ENCODE measurements at regions of chr12 and their contacts with region 1.

Region 1: GRCh38 chr12:9673404-9674225 is 4.1 kb downstream of the CLEC2D start:
- DNase-seq: peak; percentile 48
- H3K4me3 Mint-ChIP-seq: peak overlapping the region; percentile 93
- H3K27ac Mint-ChIP-seq: peak overlapping the region; percentile 97
- H3K4me1 Mint-ChIP-seq: peaks cover 58% of the 10 kb centered on the region
- H3K27me3 Mint-ChIP-seq: no peaks in the 10 kb centered on the region

Region 2: GRCh38 chr12:9244894-9245293 is 428.7 kb before region 1 on chr12:
- intact Hi-C with region 1: loop called (anchors 10 kb)
- DNase-seq: peak; percentile 13
- H3K4me3 Mint-ChIP-seq: no peak overlapping the region
- H3K27ac Mint-ChIP-seq: peak overlapping the region; percentile 95
- H3K4me1 Mint-ChIP-seq: peaks cover 39% of the 10 kb centered on the region
- H3K27me3 Mint-ChIP-seq: peaks cover 11% of the 10 kb centered on the region

Region 3: DNA sequence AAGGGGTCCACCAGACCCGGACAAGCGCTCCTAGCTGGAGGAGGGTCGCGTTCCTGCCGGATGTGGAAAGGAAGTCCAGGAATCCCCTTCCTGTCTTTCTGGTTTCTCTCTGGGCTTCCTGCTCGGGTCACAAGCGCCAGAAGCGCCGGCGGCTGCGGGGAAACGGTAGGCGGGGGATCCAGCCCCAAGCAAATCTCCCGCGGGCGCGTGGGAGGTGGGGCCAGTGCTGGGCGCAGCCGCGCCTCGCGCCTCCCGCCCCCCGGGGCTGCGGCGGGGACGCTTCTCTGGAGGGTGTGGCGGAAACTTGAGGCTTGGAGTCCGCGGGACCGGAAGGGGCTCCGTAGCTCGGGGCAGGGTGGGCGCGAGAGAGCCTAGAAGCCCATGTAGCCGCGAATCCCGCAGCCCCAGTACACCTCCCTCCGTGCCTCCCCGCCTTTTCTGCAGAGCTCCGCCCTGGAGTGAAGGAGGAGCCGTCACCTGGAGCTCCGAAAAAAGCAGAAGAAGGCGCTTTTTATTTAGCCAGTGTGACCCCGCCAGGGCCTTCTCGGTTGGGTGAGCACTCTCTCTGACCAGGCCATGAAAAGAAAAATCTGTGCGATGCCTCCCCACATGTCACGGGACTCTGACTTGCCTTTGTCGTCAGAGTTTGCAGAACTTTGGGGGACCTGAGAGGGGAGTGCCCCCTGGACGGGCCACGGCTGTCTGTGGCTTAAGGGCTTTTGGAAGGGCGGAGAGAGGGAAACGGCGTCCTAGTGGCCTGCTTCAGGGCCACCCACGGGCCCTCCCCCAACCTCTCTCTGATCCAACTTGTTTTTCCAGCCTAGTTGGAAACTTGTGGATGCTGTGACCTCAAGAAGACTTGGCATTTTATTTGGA is 25.6 kb before region 1 on chr12:
- intact Hi-C with region 1: loop called (anchors 1 kb)
- DNase-seq: peak; percentile 95
- H3K4me3 Mint-ChIP-seq: peak overlapping the region; percentile 94
- H3K27ac Mint-ChIP-seq: peak overlapping the region; percentile 96
- H3K4me1 Mint-ChIP-seq: peaks cover 46% of the 10 kb centered on the region
- H3K27me3 Mint-ChIP-seq: no peaks in the 10 kb centered on the region

Region 4: GRCh38 chr12:9697619-9698018 is 24.0 kb after region 1 on chr12:
- intact Hi-C with region 1: no loop called
- DNase-seq: no peak
- H3K4me3 Mint-ChIP-seq: no peak overlapping the region
- H3K27ac Mint-ChIP-seq: peak overlapping the region; percentile 8
- H3K4me1 Mint-ChIP-seq: peaks cover 67% of the 10 kb centered on the region
- H3K27me3 Mint-ChIP-seq: no peaks in the 10 kb centered on the region

Region 5: GRCh38 chr12:9707864-9708808 is 34.5 kb after region 1 on chr12:
- intact Hi-C with region 1: loop called (anchors 5 kb)
- DNase-seq: peak; percentile 50
- H3K4me3 Mint-ChIP-seq: peak overlapping the region; percentile 58
- H3K27ac Mint-ChIP-seq: peak overlapping the region; percentile 79
- H3K4me1 Mint-ChIP-seq: peaks cover 39% of the 10 kb centered on the region
- H3K27me3 Mint-ChIP-seq: no peaks in the 10 kb centered on the region

Region 6: DNA sequence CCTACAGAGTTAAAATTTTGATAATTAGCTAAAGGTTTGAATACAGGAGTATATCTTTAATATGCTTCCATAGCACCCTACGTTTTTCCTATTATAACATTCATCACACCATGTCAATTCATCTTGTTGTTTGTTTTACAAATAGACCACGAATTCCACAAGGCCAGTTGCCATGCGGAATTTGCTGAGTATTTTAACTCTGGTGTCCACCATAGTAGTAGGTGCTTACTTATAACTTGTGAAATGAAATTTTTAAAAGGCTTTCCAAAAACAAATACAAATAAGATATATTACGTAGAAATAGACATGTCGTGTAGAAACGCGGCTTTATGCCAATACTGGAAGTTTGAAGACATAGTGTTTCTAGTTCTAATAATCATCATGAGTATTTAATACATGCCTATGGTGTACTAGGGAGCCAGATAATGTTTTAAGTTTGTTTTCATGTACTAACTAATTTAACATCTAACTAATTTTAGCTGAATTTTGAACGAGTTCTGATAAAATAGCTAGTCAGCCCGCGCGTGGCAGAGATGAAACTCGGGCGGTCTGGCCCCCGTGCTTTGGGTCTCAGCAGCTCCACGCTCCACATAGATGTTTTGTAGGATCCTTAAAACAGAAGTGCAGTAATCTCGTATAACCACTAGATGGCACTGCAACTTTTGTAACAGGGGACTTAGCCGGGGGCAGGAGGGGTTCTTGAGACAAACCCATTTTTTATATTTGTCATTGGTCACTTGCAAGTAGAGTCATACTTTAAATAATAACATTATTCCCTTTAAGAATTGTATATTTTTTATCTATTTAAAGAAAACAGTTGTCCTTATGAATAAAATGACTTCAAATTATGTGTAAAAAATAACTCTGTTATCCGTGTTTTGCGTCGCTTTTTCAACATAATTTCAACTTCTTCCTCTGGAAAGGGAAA is 76.9 kb after region 1 on chr12:
- intact Hi-C with region 1: no loop called
- DNase-seq: peak; percentile 46
- H3K4me3 Mint-ChIP-seq: no peak overlapping the region
- H3K27ac Mint-ChIP-seq: peak overlapping the region; percentile 44
- H3K4me1 Mint-ChIP-seq: peaks cover 48% of the 10 kb centered on the region
- H3K27me3 Mint-ChIP-seq: peaks cover 1% of the 10 kb centered on the region

Region 7: GRCh38 chr12:9760699-9761418 is 87.2 kb after region 1 on chr12 and contains the start of gene CD69:
- intact Hi-C with region 1: loop called (anchors 1 kb)
- DNase-seq: peak; percentile 83
- H3K4me3 Mint-ChIP-seq: peak within 1 kb of the TSS; percentile 99
- H3K27ac Mint-ChIP-seq: peak within 1 kb of the TSS; percentile 96
- H3K4me1 Mint-ChIP-seq: peaks cover 48% of the 10 kb centered on the region
- H3K27me3 Mint-ChIP-seq: no peaks in the 10 kb centered on the region
- total RNA-seq, gene CD69: 70.9 and 72.2 TPM in 2 replicates